ENCODE measurements at regions of chr22 and their contacts with region 1.

Region 1: GRCh38 chr22:41468381-41469217 is at the starts of genes ACO2 and PHF5A:
- DNase-seq: peak; percentile 95 to 99 (median 98)
- ATAC-seq: peak; percentile 92
- H3K4me3 ChIP-seq: peak within 1 kb of the TSS; percentile 94
- H3K4me3 Mint-ChIP-seq: peak within 1 kb of the TSS; percentile 89
- H3K27ac ChIP-seq: peak within 1 kb of the TSS; percentile 94 to 98
- H3K27ac Mint-ChIP-seq: peak within 1 kb of the TSS; percentile 97
- H3K4me1 ChIP-seq: peaks cover 27% of the 10 kb centered on the region
- H3K4me1 Mint-ChIP-seq: peaks cover 62% of the 10 kb centered on the region
- H3K27me3 ChIP-seq: no peaks in the 10 kb centered on the region
- H3K27me3 Mint-ChIP-seq: no peaks in the 10 kb centered on the region
- CTCF ChIP-seq: no peak
- total RNA-seq, gene ACO2: 69.5 to 71.9 TPM
- total RNA-seq, gene PHF5A: 41.3 to 44.2 TPM

Region 2: GRCh38 chr22:41028841-41029240 is 439.8 kb before region 1 on chr22:
- CTCF ChIA-PET with region 1: no interaction called
- POLR2A ChIA-PET with region 1: no interaction called
- intact Hi-C with region 1: no loop called
- DNase-seq: no peak
- ATAC-seq: no peak
- H3K4me3 ChIP-seq: no peak overlapping the region
- H3K4me3 Mint-ChIP-seq: no peak overlapping the region
- H3K27ac ChIP-seq: no peak overlapping the region
- H3K27ac Mint-ChIP-seq: no peak overlapping the region
- H3K4me1 ChIP-seq: no peaks in the 10 kb centered on the region
- H3K4me1 Mint-ChIP-seq: no peaks in the 10 kb centered on the region
- H3K27me3 ChIP-seq: no peaks in the 10 kb centered on the region
- H3K27me3 Mint-ChIP-seq: no peaks in the 10 kb centered on the region
- CTCF ChIP-seq: no peak

Region 3: DNA sequence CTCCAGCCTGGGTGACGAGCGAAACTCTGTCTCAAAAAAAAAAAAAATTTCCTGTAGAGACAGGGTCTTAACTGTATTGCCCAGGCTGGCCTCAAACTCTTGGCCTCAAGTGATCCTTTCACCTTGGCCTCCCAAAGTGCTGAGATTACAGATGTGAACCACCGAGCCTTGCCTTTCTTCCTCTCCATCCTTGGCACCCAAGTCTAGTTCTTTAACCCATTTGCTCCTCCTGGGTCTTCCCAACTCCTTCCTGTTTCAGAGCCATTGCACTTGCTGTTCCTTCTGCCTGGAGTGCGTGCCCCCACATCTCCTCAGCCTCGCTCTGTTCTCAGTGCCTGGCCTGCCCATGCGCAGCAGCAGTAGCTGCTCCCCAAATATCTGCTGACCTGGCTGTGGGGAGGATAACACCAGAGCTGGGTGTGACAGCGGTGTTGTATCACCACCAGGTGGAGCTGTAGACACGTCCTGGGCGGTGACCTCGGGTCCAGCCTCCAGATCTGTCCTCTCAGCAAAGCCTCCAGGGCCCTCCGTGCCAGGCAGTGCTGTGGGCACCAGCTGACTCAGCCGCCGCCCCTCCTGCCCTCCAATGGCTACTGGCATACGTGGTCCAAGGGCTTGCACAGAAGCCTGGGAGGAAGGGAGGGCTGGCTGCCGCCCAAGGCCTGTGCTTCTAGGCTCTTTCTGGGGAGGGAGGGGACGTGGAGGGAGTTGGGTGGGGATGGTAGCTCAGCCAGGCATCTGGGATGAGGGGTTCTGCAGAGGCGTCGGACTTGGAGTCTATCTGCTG is 64.9 kb before region 1 on chr22:
- CTCF ChIA-PET with region 1: interaction called, 17 read pairs
- POLR2A ChIA-PET with region 1: interaction called, 13 read pairs
- intact Hi-C with region 1: no loop called
- DNase-seq: peak; percentile 69 to 91 (median 75)
- ATAC-seq: peak; percentile 99
- H3K4me3 ChIP-seq: no peak overlapping the region
- H3K4me3 Mint-ChIP-seq: no peak overlapping the region
- H3K27ac ChIP-seq: no peak overlapping the region
- H3K27ac Mint-ChIP-seq: no peak overlapping the region
- H3K4me1 ChIP-seq: peaks cover 11% of the 10 kb centered on the region
- H3K4me1 Mint-ChIP-seq: peaks cover 6% of the 10 kb centered on the region
- H3K27me3 ChIP-seq: no peaks in the 10 kb centered on the region
- H3K27me3 Mint-ChIP-seq: no peaks in the 10 kb centered on the region
- CTCF ChIP-seq: peak; percentile 96

Region 4: DNA sequence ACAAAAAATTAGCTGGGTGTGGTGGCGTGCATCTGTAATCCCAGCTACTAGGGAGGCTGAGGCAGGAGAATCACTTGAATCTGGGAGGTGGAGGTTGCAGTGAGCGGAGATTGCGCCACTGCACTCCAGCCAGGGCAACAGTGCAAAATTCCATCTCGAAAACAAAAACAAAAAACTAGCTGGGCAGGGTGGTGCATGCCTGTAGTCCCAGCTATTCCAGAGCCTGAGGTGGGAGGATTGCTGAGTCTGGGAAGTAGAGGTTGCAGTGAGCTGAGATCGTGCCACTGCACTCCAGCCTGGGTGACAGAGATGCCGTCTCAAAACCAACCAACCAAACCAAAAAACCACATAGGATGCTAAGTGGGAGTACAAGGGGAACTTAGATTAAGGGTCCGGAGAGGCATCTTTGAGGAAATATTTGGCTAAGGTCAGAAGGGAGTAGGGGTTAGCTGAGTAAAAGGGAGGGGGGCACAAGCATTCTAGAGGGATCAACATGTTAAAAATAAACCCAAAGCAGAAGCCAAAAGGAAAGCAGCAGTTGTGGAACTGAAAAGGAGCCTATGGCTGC is 10.4 kb before region 1 on chr22:
- CTCF ChIA-PET with region 1: no interaction called
- POLR2A ChIA-PET with region 1: interaction called, 19 read pairs
- intact Hi-C with region 1: no loop called
- DNase-seq: no peak
- ATAC-seq: no peak
- H3K4me3 ChIP-seq: no peak overlapping the region
- H3K4me3 Mint-ChIP-seq: no peak overlapping the region
- H3K27ac ChIP-seq: no peak overlapping the region
- H3K27ac Mint-ChIP-seq: no peak overlapping the region
- H3K4me1 ChIP-seq: no peaks in the 10 kb centered on the region
- H3K4me1 Mint-ChIP-seq: peaks cover 7% of the 10 kb centered on the region
- H3K27me3 ChIP-seq: no peaks in the 10 kb centered on the region
- H3K27me3 Mint-ChIP-seq: no peaks in the 10 kb centered on the region
- CTCF ChIP-seq: no peak

Region 5: GRCh38 chr22:41543854-41544670 is 75.5 kb after region 1 on chr22 and contains the start of gene POLR3H:
- CTCF ChIA-PET with region 1: no interaction called
- POLR2A ChIA-PET with region 1: interaction called, 10 read pairs
- intact Hi-C with region 1: loop called in 1 of 2 experiments (anchors 5 kb)
- DNase-seq: peak; percentile 91 to 99 (median 96)
- ATAC-seq: peak; percentile 98
- H3K4me3 ChIP-seq: peak within 1 kb of the TSS; percentile 90
- H3K4me3 Mint-ChIP-seq: peak within 1 kb of the TSS; percentile 98
- H3K27ac ChIP-seq: peak within 1 kb of the TSS; percentile 77 to 81
- H3K27ac Mint-ChIP-seq: peak within 1 kb of the TSS; percentile 85
- H3K4me1 ChIP-seq: peaks cover 26% of the 10 kb centered on the region
- H3K4me1 Mint-ChIP-seq: peaks cover 41% of the 10 kb centered on the region
- H3K27me3 ChIP-seq: no peaks in the 10 kb centered on the region
- H3K27me3 Mint-ChIP-seq: no peaks in the 10 kb centered on the region
- CTCF ChIP-seq: peak; percentile 51
- total RNA-seq, gene POLR3H: 13.4 to 17.3 TPM

Region 6: GRCh38 chr22:41697126-41697775 is 228.7 kb after region 1 on chr22:
- CTCF ChIA-PET with region 1: no interaction called
- POLR2A ChIA-PET with region 1: no interaction called
- intact Hi-C with region 1: no loop called
- DNase-seq: peak; percentile 84 to 98 (median 92)
- ATAC-seq: peak; percentile 78
- H3K4me3 ChIP-seq: peak overlapping the region; percentile 24
- H3K4me3 Mint-ChIP-seq: peak overlapping the region; percentile 59
- H3K27ac ChIP-seq: no peak overlapping the region
- H3K27ac Mint-ChIP-seq: no peak overlapping the region
- H3K4me1 ChIP-seq: peaks cover 24% of the 10 kb centered on the region
- H3K4me1 Mint-ChIP-seq: peaks cover 12% of the 10 kb centered on the region
- H3K27me3 ChIP-seq: no peaks in the 10 kb centered on the region
- H3K27me3 Mint-ChIP-seq: no peaks in the 10 kb centered on the region
- CTCF ChIP-seq: peak; percentile 98